GM18951 (cell line): ENCODE measurements at regions of chr7 and their contacts with region 1.

Region 1: GRCh38 chr7:129825496-129826267 is 127.1 kb downstream of the UBE2H start:
- POLR2A ChIP-seq: no peak

Region 2: DNA sequence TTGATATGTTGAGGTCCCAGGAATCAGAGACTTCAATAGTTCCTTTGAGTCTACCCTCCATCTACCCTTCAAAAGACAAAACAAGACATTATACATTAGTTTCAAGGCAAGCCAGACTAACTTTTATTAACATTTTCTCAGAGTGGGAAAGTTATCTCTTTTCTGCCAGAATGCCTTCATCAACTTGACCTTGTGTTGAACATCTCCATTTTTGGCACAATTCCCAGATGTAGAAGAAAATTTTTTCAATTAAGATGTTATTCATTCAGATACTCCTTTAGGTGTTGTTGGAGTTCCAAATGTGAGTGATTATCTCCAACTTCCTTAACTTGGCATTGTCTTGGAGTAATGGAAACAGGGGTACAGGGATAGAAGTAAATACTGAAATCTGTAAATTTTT is 155.0 kb before region 1 on chr7:
- in situ Hi-C with region 1: loop called (anchors 10 kb)
- POLR2A ChIP-seq: no peak

Region 3: GRCh38 chr7:129986600-129986999 is 160.9 kb after region 1 on chr7:
- in situ Hi-C with region 1: no loop called
- POLR2A ChIP-seq: no peak